ENCODE measurements at regions of chr20 and their contacts with region 1.

Region 1: DNA sequence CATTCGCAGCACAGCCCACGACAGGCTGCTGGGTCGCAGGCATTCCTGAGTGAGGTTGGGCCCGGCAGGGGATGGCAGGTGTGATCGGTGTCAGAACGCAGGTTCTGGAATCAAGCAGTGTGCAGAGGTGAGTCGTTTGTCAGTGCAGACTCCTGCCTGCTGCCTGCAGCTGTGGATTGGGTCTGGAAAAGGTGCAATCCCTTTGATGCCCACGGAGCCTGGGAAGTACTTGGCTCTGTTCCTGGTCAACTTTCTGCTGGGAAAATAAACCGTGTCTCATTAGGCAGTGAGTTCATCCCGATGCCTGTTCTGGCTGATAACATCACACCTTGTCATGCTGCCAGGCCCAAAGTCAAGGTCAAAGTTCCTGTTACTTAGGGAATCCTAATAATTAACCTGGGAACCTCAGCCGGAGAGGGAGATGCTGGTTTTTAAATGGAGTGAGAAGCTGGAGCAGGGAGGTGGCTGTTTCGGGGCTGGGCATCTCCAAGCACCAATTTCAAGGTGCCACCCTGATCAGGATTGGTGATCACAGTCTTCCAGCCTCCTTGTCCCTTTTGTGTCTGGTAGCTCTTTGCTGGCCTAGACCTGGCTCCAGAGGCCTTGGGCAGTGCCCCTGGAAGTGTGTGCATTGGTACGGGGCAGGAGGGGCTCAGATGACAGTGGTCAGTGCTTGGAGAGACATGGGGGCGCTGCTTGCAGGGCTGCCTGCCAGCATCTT is 61.3 kb downstream of the BCAS4 start:
- DNase-seq: peak; percentile 79
- H3K4me3 Mint-ChIP-seq: no peak overlapping the region
- H3K27ac Mint-ChIP-seq: peak overlapping the region; percentile 67
- H3K4me1 Mint-ChIP-seq: peaks cover 19% of the 10 kb centered on the region
- H3K27me3 Mint-ChIP-seq: no peaks in the 10 kb centered on the region
- CTCF ChIP-seq: no peak

Region 2: DNA sequence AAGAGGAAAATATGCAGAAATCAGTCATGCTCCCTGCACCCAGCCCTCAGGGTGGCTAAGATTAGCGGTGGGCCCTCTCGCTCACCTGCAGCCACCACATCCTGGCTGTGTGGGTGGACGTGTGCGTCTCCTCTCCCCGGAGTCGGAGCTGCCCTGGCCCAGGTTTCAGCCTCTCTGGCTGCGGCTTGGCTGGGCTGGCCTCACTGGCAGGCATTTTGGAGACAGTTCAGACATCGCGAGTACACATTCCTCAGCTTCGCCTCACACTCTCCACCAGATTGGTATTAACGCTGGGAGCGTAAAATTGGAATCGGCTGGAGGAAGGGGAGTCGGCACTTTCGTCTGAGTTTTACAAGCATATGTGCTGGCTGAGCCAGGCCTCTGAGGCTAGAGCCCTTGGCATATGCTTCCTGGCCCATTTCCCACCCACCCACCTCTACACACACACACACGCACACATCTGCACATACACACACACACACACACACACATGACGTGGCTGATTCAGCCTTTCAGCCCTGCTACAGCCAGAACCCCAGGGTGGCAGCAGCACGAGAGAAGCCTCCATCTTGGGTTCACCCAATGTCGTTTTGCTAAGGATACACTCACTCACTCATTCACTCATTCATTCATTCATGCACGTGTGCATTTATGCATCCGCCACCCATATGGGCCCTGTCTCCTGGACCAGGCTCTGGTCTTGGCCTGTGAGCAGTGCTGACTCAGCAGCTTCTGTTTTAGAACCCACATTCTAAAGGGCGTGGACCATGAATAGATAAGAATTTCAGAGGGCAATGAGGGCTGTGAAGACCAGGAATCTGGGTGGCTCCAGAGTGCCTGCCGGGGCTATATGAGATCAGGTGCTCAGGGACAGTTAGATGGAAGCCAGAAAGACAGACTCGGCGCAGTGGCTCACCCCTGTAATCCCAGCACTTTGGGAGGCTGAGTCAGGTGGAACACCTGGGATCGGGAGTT is 18.4 kb before region 1 on chr20:
- CTCF ChIA-PET with region 1: interaction called, 3 read pairs
- POLR2A ChIA-PET with region 1: interaction called, 89 read pairs
- intact Hi-C with region 1: no loop called
- DNase-seq: peak; percentile 74
- H3K4me3 Mint-ChIP-seq: peak overlapping the region; percentile 47
- H3K27ac Mint-ChIP-seq: peak overlapping the region; percentile 93
- H3K4me1 Mint-ChIP-seq: peaks cover 21% of the 10 kb centered on the region
- H3K27me3 Mint-ChIP-seq: no peaks in the 10 kb centered on the region
- CTCF ChIP-seq: no peak

Region 3: DNA sequence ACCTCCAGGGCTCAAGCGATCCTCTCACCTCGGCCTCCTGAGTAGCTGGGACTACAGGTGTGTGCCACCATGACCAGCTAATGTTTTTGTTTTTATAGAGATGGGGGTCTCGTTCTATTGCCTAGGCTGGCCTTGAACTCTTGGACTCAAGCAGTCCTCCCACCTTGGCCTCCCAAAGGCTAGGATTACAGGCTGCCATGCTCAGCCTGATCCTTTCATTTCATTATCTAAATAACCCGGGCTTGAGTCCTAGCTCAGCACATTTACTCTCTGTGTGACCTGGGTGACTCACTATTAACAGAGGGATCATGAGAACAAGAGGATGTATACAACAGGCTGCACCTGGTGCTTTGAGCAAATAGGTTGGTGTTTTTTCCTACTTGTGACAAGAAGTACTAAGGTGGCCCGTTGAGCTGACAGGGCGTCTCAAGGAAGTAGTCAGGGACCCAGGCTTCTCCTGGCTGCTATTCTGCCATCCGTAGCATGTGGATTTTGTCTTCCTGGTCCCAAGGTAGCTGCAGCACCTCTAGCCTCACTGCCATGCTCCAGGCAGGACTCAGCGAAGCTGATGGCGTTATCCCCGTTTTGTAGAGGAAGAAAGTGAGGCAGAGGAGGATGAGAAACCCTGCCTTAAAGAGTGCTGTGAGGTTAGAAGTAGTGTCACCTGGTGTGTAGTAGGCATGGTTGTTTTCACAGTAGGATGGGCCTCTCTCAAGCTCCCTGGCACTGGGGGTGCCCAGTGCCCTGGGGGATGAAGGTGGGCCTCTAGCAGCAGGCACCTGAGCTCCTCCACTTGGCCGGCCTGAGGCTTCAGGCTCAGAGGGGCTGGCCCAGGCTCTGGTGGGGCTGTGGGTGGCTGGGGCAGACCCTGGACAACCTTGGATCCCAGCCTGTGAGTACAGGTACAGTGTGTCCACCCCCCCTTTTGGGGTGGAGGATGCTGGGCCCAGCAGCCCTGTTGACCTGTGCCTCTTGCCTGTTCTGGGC is 12.6 kb after region 1 on chr20:
- CTCF ChIA-PET with region 1: interaction called, 8 read pairs
- POLR2A ChIA-PET with region 1: interaction called, 22 read pairs
- intact Hi-C with region 1: no loop called
- DNase-seq: no peak
- H3K4me3 Mint-ChIP-seq: no peak overlapping the region
- H3K27ac Mint-ChIP-seq: no peak overlapping the region
- H3K4me1 Mint-ChIP-seq: peaks cover 19% of the 10 kb centered on the region
- H3K27me3 Mint-ChIP-seq: no peaks in the 10 kb centered on the region
- CTCF ChIP-seq: no peak

Region 4: GRCh38 chr20:50913690-50914375 is 57.6 kb after region 1 on chr20:
- CTCF ChIA-PET with region 1: interaction called, 5 read pairs
- POLR2A ChIA-PET with region 1: interaction called, 14 read pairs
- intact Hi-C with region 1: no loop called
- DNase-seq: peak; percentile 68
- H3K4me3 Mint-ChIP-seq: no peak overlapping the region
- H3K27ac Mint-ChIP-seq: peak overlapping the region; percentile 6
- H3K4me1 Mint-ChIP-seq: peaks cover 57% of the 10 kb centered on the region
- H3K27me3 Mint-ChIP-seq: no peaks in the 10 kb centered on the region
- CTCF ChIP-seq: no peak